Vagina (tissue), 2 donors: ENCODE measurements at regions of chr14 and their contacts with region 1.

Region 1: DNA sequence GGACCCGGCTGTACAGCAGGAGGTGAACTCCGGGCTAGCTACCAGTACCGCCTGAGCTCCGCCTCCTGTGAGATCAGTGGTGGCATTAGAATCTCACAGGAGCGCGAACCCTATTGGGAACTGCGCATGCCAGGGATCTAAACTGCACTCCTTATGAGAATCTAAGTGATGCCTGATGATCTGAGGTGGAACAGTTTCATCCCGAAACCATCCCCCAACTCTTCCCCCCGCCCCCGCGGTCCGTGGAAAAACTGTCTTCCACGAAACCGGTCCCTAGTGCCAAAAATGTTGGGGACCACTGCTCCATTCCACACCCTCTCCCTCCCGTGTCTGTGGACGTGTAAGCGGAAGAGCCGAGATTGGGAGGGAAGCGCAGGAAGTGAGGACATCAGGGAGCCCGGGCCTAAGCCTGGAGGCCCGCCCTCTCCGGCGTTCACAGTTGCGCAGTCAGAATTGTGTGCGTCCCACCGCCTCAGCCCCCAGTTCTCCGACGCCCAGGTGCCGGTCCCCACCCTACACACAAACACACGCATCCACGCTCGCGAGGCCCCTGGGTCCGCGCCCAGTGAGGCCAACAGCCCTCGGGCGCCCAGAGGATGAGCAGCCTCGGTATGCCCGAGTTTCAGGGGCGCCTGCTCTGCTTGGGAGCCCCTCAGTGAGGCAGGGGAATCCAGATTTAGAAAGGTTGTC is 1.8 kb upstream of the RNASE4 start:
- DNase-seq: peak in 1 of 2 donors; percentile 97
- H3K4me3 ChIP-seq: peak overlapping the region; percentile 67 to 79
- H3K27ac ChIP-seq: peak overlapping the region; percentile 99
- H3K4me1 ChIP-seq: peaks cover 43% of the 10 kb centered on the region
- H3K27me3 ChIP-seq: no peaks in the 10 kb centered on the region
- CTCF ChIP-seq: no peak
- POLR2A ChIP-seq: peak; percentile 47 to 98

Region 2: GRCh38 chr14:20343092-20343861 is 339.3 kb before region 1 on chr14 and contains the start of gene PARP2:
- intact Hi-C with region 1: loop called (anchors 5 kb)
- DNase-seq: peak; percentile 98 to 99
- H3K4me3 ChIP-seq: peak within 1 kb of the TSS; percentile 66 to 86
- H3K27ac ChIP-seq: peak within 1 kb of the TSS; percentile 96
- H3K4me1 ChIP-seq: peaks cover 6% of the 10 kb centered on the region
- H3K27me3 ChIP-seq: no peaks in the 10 kb centered on the region
- CTCF ChIP-seq: no peak
- POLR2A ChIP-seq: peak in 1 of 2 donors; percentile 90
- total RNA-seq, gene PARP2: 5.9 TPM

Region 3: DNA sequence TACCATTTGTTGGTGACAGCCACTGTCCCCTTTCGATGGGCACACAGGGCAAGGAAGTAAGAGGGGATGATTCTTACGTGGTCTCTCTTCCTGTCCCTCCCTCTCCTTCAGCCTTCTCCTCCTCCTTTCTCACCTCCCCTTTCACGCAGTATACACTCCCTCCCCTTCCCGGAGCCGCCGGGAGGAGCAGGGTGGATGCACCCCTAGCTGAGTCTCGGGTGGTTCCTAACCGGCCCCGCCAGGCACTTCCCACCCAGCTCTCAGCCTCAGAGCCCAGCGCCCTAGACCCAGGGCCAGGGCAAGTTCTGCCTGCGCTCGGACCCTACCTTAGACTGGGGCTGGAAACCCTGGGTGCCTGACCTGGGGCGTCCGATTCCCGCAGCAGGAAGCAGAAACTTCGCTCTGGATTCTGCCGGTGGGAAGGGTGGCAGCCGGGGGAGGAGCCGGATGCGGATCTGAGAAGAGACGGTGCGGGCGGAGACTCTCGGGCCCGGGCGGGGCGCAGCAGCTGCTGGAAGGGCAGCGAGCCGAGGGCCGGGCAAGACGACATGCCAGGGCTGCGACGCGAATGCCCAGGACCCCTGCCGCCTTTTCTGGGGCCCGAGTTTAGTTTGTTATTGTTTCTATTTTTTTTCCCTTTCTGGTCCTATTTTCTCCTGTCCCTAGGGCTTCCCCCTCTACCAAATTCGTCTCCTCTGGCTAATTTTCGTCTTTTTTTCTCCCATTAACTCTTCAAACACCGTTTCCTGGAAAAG is 269.4 kb before region 1 on chr14 and contains the start of gene TEP1:
- intact Hi-C with region 1: loop called (anchors 5 kb)
- DNase-seq: no peak
- H3K4me3 ChIP-seq: peak within 1 kb of the TSS; percentile 67 to 72
- H3K27ac ChIP-seq: peak within 1 kb of the TSS; percentile 90
- H3K4me1 ChIP-seq: peaks cover 26% of the 10 kb centered on the region
- H3K27me3 ChIP-seq: no peaks in the 10 kb centered on the region
- CTCF ChIP-seq: no peak
- POLR2A ChIP-seq: peak in 1 of 2 donors; percentile 27
- total RNA-seq, gene TEP1: 24.6 TPM

Region 4: DNA sequence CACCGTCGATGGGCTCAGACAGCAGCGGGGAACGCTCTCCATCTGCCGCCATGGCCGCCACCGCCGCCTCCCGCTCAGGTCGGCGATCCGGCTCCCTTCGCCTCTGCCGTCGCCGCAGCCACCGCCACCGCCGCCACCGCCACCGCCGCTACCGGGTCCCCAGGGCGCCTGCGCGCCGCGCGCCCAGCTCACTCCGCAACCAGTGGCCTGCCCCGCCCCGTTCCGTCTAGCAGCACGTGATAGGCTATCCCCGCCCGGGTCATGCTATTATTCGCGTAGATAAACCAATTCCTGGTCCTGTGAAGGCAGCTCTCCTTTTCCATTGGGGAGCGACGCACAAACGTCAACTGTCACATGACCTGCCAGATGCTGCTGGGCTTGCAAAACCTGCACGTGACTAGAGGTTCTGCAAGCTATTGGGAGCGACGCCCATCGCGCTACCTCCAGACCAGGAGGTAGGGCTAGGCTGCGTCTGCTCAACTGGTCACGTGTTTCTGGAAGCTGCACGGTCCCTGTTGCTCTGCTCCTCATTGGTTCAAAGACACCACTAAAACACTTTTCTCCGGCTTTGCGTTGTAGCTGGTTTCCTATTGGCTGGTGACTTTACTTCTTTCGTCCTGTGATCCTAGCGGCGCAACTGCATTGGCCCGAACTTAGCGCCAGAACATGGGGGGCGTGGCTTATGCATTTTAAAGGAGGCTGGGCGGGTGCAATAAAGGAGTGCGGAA is 221.1 kb before region 1 on chr14 and contains the start of gene PIP4P1:
- intact Hi-C with region 1: loop called (anchors 5 kb)
- DNase-seq: peak; percentile 100
- H3K4me3 ChIP-seq: peak within 1 kb of the TSS; percentile 88 to 98
- H3K27ac ChIP-seq: peak within 1 kb of the TSS; percentile 98
- H3K4me1 ChIP-seq: peaks cover 39% of the 10 kb centered on the region
- H3K27me3 ChIP-seq: no peaks in the 10 kb centered on the region
- CTCF ChIP-seq: peak in 1 of 3 experiments; percentile 16
- POLR2A ChIP-seq: peak in 1 of 2 donors; percentile 90
- total RNA-seq, gene PIP4P1: 24.1 TPM

Region 5: DNA sequence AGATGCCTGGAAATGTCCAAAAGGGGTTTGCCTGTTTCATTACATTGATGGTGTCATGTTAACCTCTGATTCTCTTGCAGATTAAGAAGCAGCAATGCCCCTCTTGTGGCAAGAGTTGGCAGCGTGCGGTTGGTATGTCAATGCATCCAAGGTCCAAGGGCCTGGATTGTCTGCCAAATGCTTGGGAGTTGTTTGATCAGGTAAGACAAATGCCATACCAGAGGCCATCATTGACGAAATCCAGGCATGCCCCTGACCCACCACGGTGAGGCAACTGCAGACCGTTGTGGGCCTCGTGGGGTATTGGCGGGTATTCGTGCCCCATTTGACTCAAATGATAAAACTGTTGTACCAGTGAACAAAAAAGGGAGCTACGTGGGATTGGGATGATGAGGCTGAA is 80.0 kb before region 1 on chr14:
- intact Hi-C with region 1: no loop called
- DNase-seq: no peak
- H3K4me3 ChIP-seq: no peak overlapping the region
- H3K27ac ChIP-seq: no peak overlapping the region
- H3K4me1 ChIP-seq: no peaks in the 10 kb centered on the region
- H3K27me3 ChIP-seq: no peaks in the 10 kb centered on the region
- CTCF ChIP-seq: no peak
- POLR2A ChIP-seq: no peak

Region 6: GRCh38 chr14:20613094-20614037 is 69.2 kb before region 1 on chr14:
- intact Hi-C with region 1: loop called (anchors 2 kb)
- DNase-seq: peak in 1 of 2 donors; percentile 98
- H3K4me3 ChIP-seq: peak overlapping the region; percentile 50 to 64
- H3K27ac ChIP-seq: peak overlapping the region; percentile 82
- H3K4me1 ChIP-seq: peaks cover 18% of the 10 kb centered on the region
- H3K27me3 ChIP-seq: no peaks in the 10 kb centered on the region
- CTCF ChIP-seq: peak; percentile 51 to 94 (median 56)
- POLR2A ChIP-seq: no peak

Region 7: DNA sequence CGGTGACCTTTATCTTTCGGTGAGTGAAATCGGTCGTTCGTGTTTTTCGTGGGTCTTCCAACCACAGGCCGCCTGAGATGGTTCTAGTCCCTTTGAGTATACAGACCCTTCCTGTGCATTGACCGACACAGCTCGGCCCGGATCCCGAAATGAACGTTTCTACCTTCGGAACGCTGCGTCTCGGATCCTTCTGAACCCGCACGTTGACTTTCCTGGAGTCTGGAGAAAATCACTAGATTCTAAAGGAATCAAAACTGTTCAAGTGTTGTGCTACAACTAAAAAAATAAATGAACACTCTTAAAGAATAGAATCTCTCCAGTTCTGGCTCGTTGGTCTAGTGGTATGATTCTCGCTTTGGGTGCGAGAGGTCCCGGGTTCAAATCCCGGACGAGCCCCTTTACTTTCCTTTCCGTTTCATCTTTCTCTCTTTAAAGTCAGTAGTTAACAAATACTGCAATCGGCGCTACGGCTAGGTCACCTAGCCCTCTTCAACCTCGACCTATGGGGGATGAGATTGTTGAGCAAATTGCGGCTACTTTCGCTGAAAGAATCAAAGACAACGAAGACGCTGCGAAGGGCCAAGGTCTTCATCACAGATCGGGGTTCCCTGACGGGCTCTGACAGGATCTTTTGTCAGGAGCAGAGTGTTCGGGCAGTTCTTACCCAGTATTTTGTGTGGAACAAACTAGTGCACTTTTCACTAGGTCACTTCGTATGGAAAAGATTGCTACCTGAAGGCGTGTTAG is 49.7 kb before region 1 on chr14:
- intact Hi-C with region 1: loop called (anchors 5 kb)
- DNase-seq: no peak
- H3K4me3 ChIP-seq: peak overlapping the region; percentile 30 to 32
- H3K27ac ChIP-seq: no peak overlapping the region
- H3K4me1 ChIP-seq: peaks cover 25% of the 10 kb centered on the region
- H3K27me3 ChIP-seq: no peaks in the 10 kb centered on the region
- CTCF ChIP-seq: no peak
- POLR2A ChIP-seq: no peak

Region 8: DNA sequence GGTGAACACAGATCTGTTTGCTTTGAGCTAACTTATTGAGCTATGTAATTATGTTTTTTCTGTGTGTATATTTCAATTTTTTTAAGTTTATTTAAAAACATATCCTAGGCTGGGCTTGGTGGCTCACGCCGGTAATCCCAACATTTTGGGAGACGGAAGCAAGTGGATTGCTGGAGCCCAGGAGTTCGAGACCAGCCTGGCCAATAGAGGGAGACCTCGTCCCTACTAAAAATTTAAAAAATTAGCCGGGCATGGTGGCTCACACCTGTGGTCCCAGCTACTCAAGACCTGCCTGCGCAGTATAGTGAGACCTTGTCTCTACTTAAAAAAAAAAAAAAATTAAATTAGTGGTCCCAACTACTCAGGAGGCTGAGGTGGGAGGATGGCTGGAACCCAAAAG is 136.3 kb after region 1 on chr14:
- intact Hi-C with region 1: no loop called
- DNase-seq: no peak
- H3K4me3 ChIP-seq: no peak overlapping the region
- H3K27ac ChIP-seq: no peak overlapping the region
- H3K4me1 ChIP-seq: no peaks in the 10 kb centered on the region
- H3K27me3 ChIP-seq: no peaks in the 10 kb centered on the region
- CTCF ChIP-seq: no peak
- POLR2A ChIP-seq: no peak

Region 9: GRCh38 chr14:20873370-20874177 is 191.0 kb after region 1 on chr14:
- intact Hi-C with region 1: no loop called
- DNase-seq: no peak
- H3K4me3 ChIP-seq: no peak overlapping the region
- H3K27ac ChIP-seq: no peak overlapping the region
- H3K4me1 ChIP-seq: no peaks in the 10 kb centered on the region
- H3K27me3 ChIP-seq: no peaks in the 10 kb centered on the region
- CTCF ChIP-seq: peak; percentile 24 to 47 (median 33)
- POLR2A ChIP-seq: no peak